ENCODE measurements at regions of chr7 and their contacts with region 1.

Region 1: DNA sequence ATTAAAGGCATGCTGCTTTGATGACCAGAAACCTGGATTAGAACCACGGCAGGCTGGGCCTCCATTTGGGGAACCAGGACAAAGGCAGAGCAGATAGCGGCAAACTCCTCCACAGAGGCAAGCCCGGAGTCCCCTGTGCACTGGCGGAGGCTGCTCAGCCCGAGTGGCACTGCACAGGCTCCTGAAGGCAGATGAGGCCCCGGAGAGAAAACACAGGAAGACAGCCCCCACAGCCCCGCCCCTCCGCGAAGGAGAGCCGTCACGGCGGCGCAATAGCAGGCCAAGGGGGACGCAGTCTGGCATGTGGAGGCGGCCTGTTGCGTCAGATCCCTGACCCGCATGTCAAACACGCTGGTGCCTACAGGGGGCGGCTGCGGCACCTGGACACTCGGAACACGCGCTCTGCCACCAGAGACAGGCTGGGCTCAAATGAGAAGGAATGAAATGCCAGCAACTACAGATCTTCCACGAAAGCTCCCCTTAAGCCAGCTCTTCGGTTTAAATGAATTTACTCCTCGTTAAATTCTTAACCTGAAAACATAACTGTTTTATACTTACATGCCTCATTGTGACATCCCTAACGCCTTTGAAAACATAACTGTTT is 128.5 kb downstream of the MAD1L1 start:
- DNase-seq: peak; percentile 88
- ATAC-seq: peak; percentile 74
- H3K4me3 Mint-ChIP-seq: no peak overlapping the region
- H3K27ac Mint-ChIP-seq: peak overlapping the region; percentile 51
- H3K4me1 Mint-ChIP-seq: peaks cover 35% of the 10 kb centered on the region
- H3K27me3 Mint-ChIP-seq: no peaks in the 10 kb centered on the region

Region 2: DNA sequence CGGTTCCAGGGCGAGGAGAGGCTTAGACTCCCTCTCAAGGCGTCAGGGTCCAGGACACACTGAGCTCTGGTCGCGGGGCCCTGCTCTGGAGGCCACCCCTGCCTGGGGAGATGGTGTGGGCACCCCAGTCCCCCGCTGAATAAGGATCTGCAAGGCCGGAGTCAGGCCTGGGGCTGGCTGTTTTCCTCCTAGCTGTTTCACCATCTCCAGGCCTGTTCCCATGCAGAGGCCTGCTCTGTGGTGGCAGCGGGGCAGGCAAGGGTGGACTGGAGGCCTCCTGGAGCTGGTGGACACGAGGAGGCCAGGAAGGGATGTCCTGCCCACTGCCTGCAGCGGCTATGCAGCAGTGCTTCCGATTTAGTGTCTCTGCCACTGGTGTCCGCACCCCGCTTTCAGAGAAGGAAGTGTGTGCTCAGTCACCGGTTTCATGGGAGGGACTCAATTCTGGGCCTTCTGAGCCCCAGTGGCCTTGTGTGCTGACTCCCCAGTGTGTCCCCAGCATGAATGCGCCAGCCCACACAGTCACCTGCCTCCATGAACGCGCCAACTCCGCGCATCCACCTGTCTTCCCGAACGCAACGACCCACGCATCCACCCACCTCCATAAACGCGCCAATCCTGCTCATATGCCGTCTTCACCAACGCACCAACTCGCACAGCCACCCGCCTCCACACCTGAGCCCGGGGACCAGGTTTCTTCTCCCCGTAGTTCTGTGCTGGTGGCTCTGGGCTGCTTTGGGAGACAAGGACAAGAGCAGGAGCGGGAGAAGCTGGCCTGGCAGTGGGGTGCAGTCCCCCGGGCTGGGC is 1074.4 kb before region 1 on chr7:
- CTCF ChIA-PET with region 1: no interaction called
- POLR2A ChIA-PET with region 1: no interaction called
- intact Hi-C with region 1: no loop called
- DNase-seq: no peak
- ATAC-seq: no peak
- H3K4me3 Mint-ChIP-seq: no peak overlapping the region
- H3K27ac Mint-ChIP-seq: peak overlapping the region; percentile 38
- H3K4me1 Mint-ChIP-seq: peaks cover 41% of the 10 kb centered on the region
- H3K27me3 Mint-ChIP-seq: no peaks in the 10 kb centered on the region

Region 3: GRCh38 chr7:1823376-1824150 is 280.6 kb before region 1 on chr7:
- CTCF ChIA-PET with region 1: no interaction called
- POLR2A ChIA-PET with region 1: no interaction called
- intact Hi-C with region 1: loop called in 1 of 2 experiments (anchors 5 kb)
- DNase-seq: no peak
- ATAC-seq: no peak
- H3K4me3 Mint-ChIP-seq: no peak overlapping the region
- H3K27ac Mint-ChIP-seq: no peak overlapping the region
- H3K4me1 Mint-ChIP-seq: peaks cover 43% of the 10 kb centered on the region
- H3K27me3 Mint-ChIP-seq: no peaks in the 10 kb centered on the region

Region 4: DNA sequence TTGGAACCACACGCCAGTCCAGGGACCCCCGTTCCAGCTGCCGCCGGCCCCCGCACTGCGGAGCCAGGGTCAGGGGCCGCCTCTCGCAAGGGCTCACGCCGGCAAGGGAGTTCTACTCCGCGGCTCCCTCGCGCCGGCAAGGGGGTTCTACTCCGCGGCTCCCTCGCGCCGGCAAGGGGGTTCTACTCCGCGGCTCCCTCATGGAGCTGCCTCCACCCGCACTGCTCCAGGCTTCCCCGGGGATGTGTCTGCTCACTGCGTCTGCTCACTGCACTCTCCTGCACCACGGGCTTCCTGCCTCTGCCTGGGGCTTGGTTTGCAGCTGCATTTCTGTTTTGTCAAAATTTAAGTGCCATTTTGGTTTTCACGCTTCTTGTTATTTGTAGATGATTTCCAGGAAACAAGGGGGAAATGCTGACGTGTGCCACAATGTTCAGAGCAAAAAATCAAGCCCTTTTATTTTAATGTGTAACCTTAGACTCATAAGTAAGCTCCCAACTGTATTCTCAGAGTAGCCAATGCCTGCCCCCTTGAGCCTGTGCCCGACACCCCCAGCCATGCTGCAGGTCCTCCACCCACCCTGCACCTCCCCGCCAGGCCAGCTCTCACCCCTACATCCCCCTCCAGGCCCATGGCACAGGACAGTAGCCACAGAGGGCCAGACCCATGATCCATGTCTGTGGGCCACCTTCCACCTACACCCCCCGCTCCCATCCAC is 117.7 kb before region 1 on chr7:
- CTCF ChIA-PET with region 1: no interaction called
- POLR2A ChIA-PET with region 1: no interaction called
- intact Hi-C with region 1: no loop called
- DNase-seq: peak; percentile 40
- ATAC-seq: peak; percentile 71
- H3K4me3 Mint-ChIP-seq: no peak overlapping the region
- H3K27ac Mint-ChIP-seq: peak overlapping the region; percentile 76
- H3K4me1 Mint-ChIP-seq: peaks cover 28% of the 10 kb centered on the region
- H3K27me3 Mint-ChIP-seq: no peaks in the 10 kb centered on the region

Region 5: DNA sequence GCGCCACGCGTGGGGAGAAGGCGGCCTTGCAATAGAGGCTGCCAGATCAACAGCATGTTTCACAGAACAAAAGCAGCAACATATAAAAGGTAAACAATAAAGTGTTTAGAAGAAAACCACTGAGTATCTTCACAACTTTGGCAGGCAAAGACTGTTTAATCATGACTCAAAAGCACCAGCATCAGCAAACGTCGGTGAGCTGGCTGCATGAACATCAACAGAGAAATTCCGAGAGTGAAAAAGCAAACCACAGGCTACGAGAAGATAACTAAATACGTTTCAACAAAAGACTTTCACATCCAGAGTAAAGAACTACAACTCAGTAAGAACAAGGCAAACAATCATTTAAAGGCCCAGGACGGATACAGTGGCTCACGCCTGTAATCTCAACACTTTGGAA is 43.5 kb before region 1 on chr7:
- CTCF ChIA-PET with region 1: no interaction called
- POLR2A ChIA-PET with region 1: no interaction called
- intact Hi-C with region 1: no loop called
- DNase-seq: no peak
- ATAC-seq: no peak
- H3K4me3 Mint-ChIP-seq: no peak overlapping the region
- H3K27ac Mint-ChIP-seq: no peak overlapping the region
- H3K4me1 Mint-ChIP-seq: peaks cover 12% of the 10 kb centered on the region
- H3K27me3 Mint-ChIP-seq: no peaks in the 10 kb centered on the region

Region 6: GRCh38 chr7:2209146-2209960 is 105.1 kb after region 1 on chr7:
- CTCF ChIA-PET with region 1: no interaction called
- POLR2A ChIA-PET with region 1: no interaction called
- intact Hi-C with region 1: loop called in 1 of 2 experiments (anchors 5 kb)
- DNase-seq: peak; percentile 72
- ATAC-seq: no peak
- H3K4me3 Mint-ChIP-seq: no peak overlapping the region
- H3K27ac Mint-ChIP-seq: no peak overlapping the region
- H3K4me1 Mint-ChIP-seq: peaks cover 4% of the 10 kb centered on the region
- H3K27me3 Mint-ChIP-seq: no peaks in the 10 kb centered on the region

Region 7: GRCh38 chr7:2241580-2242540 is 137.7 kb after region 1 on chr7 and contains the starts of genes MRM2 and NUDT1:
- CTCF ChIA-PET with region 1: no interaction called
- POLR2A ChIA-PET with region 1: no interaction called
- intact Hi-C with region 1: loop called in 1 of 2 experiments (anchors 5 kb)
- DNase-seq: peak; percentile 84
- ATAC-seq: peak; percentile 82
- H3K4me3 Mint-ChIP-seq: peak within 1 kb of the TSS; percentile 88
- H3K27ac Mint-ChIP-seq: peak within 1 kb of the TSS; percentile 88
- H3K4me1 Mint-ChIP-seq: peaks cover 10% of the 10 kb centered on the region
- H3K27me3 Mint-ChIP-seq: no peaks in the 10 kb centered on the region
- total RNA-seq, gene MRM2: 28.7 to 32.1 TPM
- total RNA-seq, gene NUDT1: 52.5 to 100 TPM

Measured in activated CD4-positive, alpha-beta T cell treated with anti-CD3 and anti-CD28 coated beads for 36 hours (primary cell).